SK-N-SH (cell line): ENCODE measurements at regions of chr1 and their contacts with region 1.

Region 1: DNA sequence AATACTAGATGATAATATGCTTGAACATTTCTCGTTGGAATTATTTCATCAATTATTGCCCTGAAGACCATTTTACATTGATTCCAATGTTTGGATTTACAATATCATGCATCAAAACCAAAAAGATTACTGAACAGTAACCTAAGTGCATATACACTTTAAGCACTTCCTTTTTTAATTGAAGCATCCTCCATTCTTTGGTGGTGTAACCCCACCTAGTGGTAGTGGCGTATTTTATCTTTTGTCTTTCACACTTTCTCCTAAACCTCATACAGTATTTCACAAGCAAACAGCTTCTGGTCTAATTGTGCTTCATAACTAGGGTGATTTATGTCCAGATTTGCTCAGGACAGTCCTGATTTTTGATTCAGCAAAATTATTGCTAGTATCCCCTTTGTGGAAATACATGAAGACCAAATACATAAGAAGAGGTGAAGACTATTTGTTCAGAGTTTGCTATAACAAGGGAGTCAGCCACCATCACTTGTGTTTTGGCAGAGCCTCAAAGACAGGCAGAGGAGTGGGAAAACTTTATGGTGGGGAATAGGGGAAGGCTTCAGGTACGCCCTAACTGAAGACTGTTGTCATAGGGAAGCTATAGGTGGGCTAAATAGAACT is 3.4 kb upstream of the NVL start:
- DNase-seq: peak; percentile 57
- H3K4me3 ChIP-seq: peak overlapping the region in 1 of 2 experiments; percentile 35; a peak in 2 of 4 replicates
- H3K27ac ChIP-seq: peak overlapping the region; percentile 54 to 91; a peak in 3 of 4 replicates
- H3K4me1 ChIP-seq: peaks cover 4 to 11% of the 10 kb centered on the region in 2 experiments
- H3K27me3 ChIP-seq: no peaks in the 10 kb centered on the region
- CTCF ChIP-seq: peak; percentile 78
- EP300 ChIP-seq: no peak
- RAD21 ChIP-seq: peak; percentile 87

Region 2: DNA sequence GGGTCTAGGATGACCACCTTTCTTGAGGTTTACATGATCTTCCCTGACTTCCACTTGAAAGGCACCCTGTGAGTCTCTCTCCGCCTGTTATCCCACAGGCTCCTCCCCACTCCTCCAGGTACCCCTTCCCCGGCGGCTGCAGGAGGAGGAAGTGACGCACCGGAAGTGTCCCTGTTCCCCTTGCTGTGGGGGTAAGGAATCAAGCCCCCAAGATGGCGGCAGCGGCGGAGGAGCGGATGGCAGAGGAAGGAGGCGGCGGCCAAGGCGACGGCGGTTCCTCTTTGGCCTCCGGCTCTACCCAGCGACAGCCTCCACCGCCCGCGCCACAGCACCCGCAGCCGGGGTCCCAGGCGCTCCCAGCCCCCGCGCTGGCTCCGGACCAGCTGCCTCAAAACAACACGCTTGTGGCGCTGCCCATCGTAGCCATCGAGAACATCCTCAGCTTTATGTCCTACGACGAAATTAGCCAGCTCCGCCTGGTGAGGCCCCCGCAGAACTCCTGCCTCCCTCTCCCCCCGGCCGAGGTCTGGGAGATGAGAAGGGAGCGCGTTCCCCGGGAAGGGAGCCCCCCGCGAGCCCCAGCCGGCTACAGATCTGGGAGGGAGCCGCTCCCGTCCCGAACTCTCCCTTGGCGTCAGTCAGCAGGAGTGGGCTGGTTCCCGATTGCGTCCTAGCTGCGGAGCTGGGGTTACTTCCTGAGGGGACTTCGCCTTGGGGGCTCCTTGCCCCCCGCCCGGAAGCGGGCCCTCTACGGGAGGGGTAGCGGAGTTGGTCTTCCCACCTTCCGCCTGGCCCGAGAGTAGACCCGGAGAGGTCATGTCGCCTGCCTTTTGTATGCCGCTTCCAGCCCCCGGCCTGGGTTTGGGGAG is 219.3 kb before region 1 on chr1 and contains the start of gene FBXO28:
- CTCF ChIA-PET with region 1: interaction called, 32 read pairs
- POLR2A ChIA-PET with region 1: interaction called, 3 read pairs
- DNase-seq: peak; percentile 96
- H3K4me3 ChIP-seq: peak within 1 kb of the TSS; percentile 91 to 99
- H3K27ac ChIP-seq: peak within 1 kb of the TSS; percentile 81 to 92
- H3K4me1 ChIP-seq: peaks cover 0 to 20% of the 10 kb centered on the region in 2 experiments; a peak in 3 of 4 replicates
- H3K27me3 ChIP-seq: peaks cover 6% of the 10 kb centered on the region; the same call in 1 of the 2 replicates
- CTCF ChIP-seq: no peak
- EP300 ChIP-seq: no peak
- RAD21 ChIP-seq: no peak
- polyA plus RNA-seq, gene FBXO28: 8.1 and 12.1 TPM in 2 replicates